Activated T-helper 1 cell treated with anti-CD3 and anti-CD28 coated beads, Interleukin-12 subunit alpha, Interleukin-12 subunit beta, Interleukin-2, Interleukin-4 antibody, amounts not matched to agents 30 ng/mL and 10 ng/mL and 1 ng/mL, durations not matched to agents 14 hours and 24 hours and 36 hours (primary cell): ENCODE measurements at regions of chr3 and their contacts with region 1.

Region 1: GRCh38 chr3:143951351-143951971 is 20.2 kb upstream of the DIPK2A start:
- DNase-seq: no peak
- H3K4me3 Mint-ChIP-seq: no peak overlapping the region
- H3K27ac Mint-ChIP-seq: no peak overlapping the region
- H3K4me1 Mint-ChIP-seq: no peaks in the 10 kb centered on the region
- H3K27me3 Mint-ChIP-seq: peaks cover 25% of the 10 kb centered on the region

Region 2: GRCh38 chr3:143585720-143586456 is 365.6 kb before region 1 on chr3:
- intact Hi-C with region 1: no loop called
- DNase-seq: no peak
- H3K4me3 Mint-ChIP-seq: no peak overlapping the region
- H3K27ac Mint-ChIP-seq: peak overlapping the region; percentile 20
- H3K4me1 Mint-ChIP-seq: peaks cover 21% of the 10 kb centered on the region
- H3K27me3 Mint-ChIP-seq: no peaks in the 10 kb centered on the region

Region 3: DNA sequence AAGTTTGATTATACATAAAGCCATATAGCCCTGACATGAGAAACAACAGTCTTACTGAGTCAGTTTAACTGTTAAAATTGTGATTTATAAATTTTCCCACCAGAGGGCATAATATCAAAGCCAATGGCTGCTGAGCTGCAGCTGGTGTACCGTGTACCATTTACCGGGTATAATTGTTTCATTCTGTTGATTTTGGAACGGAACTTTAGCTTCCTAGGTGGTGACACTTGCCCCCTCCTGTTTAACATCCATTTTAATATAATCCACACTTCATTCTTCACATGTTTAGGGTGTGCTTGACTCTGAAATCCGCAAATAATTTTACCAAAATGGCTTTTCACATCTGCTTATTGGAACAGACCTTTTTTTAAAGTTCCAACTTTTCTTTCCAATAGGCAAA is 176.0 kb before region 1 on chr3:
- intact Hi-C with region 1: loop called (anchors 1 kb)
- DNase-seq: no peak
- H3K4me3 Mint-ChIP-seq: no peak overlapping the region
- H3K27ac Mint-ChIP-seq: no peak overlapping the region
- H3K4me1 Mint-ChIP-seq: peaks cover 8% of the 10 kb centered on the region
- H3K27me3 Mint-ChIP-seq: peaks cover 2% of the 10 kb centered on the region

Region 4: GRCh38 chr3:143885780-143886427 is 65.6 kb before region 1 on chr3:
- intact Hi-C with region 1: loop called (anchors 1 kb)
- DNase-seq: peak; percentile 3
- H3K4me3 Mint-ChIP-seq: no peak overlapping the region
- H3K27ac Mint-ChIP-seq: no peak overlapping the region
- H3K4me1 Mint-ChIP-seq: no peaks in the 10 kb centered on the region
- H3K27me3 Mint-ChIP-seq: peaks cover 14% of the 10 kb centered on the region